ENCODE measurements at regions of chr1 and their contacts with region 1.

Region 1: GRCh38 chr1:52365746-52366516 is at the start of gene CC2D1B:
- DNase-seq: peak; percentile 89 to 99 (median 94)

Region 2: GRCh38 chr1:52141513-52142219 is 224.3 kb before region 1 on chr1 and contains the start of gene ZFYVE9:
- intact Hi-C with region 1: loop called (anchors 5 kb)
- DNase-seq: peak; percentile 40 to 95 (median 68)

Region 3: DNA sequence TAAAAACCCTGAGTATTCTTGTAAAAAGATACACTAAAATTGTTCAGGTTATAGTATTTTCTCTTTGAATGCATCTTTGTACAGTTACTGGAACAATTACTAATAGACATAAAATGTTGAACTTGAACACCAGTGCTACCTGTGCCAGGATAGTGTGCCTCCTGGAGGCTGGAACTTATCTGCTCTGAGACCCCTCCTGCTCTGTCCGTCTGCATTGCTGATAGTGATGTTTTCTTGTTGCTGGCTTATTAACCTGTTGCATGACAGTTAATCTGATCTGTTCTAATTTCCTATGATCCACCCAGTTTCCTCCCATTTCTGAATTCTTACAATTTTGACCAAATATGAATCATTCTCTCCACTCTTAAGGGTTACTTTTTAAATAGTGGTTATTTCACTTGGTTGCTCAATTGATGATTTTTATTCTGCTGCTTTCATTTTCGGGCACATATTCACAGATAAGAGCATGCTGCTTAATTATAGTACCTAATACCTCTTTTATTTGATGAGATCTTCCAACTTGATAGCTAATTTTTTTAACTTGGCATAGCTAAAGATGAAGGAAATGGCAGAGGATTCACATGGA is 101.3 kb before region 1 on chr1:
- intact Hi-C with region 1: no loop called
- DNase-seq: no peak

Region 4: DNA sequence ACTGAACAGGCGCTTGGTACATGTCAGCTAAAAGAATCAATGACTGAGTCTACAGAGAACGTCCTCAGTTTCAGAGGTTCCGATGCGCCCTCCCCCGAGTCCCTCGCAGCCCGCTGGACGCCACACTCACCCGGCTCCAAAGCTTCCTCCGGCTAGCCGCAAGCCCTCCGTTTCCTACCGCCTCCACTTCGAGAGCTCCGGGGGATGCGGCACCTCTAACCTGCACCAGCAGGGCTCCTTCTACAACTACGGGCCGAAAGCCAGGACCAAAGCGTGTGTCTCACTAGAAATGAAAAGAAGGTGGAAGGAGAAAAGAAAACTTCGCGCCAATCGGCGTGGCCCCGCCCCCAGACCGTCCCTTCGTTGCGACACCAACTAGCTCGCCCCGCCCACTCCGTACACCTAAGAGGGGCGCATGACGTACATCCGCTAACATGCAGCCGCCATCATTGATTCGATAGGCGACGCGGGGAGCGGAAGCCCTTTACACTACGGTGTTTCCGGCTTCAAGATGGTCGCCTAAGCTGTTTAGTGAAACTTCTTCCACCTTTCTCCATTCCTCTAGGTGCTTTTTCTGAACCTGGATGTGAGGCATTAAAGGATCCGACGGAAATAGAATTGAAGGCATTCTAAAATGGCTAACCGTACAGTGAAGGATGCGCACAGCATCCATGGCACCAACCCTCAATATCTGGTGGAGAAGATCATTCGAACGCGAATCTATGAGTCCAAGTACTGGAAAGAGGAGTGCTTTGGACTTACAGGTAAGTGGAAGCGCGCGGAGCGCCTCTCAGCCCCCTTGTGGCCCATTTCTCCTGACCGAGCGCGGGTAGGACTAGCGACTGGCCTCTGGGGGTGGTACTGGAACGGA is 38.4 kb after region 1 on chr1 and contains the starts of genes ORC1 and PRPF38A:
- intact Hi-C with region 1: loop called (anchors 1 kb)
- DNase-seq: peak; percentile 94 to 99 (median 98)

Region 5: GRCh38 chr1:52426371-52426770 is 60.4 kb after region 1 on chr1:
- intact Hi-C with region 1: no loop called
- DNase-seq: no peak

Region 6: GRCh38 chr1:52502789-52503188 is 136.9 kb after region 1 on chr1:
- intact Hi-C with region 1: no loop called
- DNase-seq: no peak

Region 7: GRCh38 chr1:52697795-52698674 is 332.1 kb after region 1 on chr1 and contains the start of gene COA7:
- intact Hi-C with region 1: loop called (anchors 10 kb)
- DNase-seq: peak; percentile 75 to 98 (median 84)